ENCODE measurements at regions of chr16 and their contacts with region 1.

Region 1: DNA sequence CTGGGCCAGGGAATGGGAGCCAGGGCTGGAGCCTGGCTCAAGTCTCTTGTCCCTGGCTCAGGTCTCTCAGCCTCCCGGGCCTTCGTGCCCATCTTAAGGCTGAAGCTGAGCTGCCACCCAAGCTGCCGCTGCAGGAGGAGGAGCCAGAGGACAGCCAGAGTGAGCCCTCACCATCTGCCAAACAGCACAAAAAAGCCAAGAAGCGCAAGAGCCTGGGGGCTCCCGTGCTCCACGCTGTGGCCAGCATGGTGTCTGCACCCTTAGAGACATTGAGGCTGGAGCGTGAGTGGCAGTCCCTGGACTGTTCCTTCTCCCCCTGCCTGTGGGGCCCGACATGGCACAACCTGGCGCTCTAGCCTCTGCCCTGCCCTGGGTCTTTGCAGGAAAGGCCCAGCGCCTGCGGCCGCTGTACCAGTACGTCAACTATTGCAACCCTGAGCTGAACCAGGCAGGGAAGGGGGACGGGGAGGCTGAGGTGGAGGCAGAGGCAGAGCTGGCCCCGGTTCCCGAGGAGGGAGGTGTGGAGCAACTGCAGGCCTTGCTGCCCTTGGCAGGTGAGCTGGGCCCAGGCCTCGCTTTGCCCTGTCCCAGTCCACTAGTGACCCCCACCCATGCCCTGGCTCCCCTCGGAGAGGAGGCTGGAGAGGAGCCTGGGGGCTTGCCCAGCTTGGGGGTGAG is 1.3 kb downstream of the C16orf86 start:
- DNase-seq: peak; percentile 90
- H3K4me3 Mint-ChIP-seq: peak overlapping the region; percentile 82
- H3K27ac Mint-ChIP-seq: no peak overlapping the region
- H3K4me1 Mint-ChIP-seq: peaks cover 15% of the 10 kb centered on the region
- H3K27me3 Mint-ChIP-seq: no peaks in the 10 kb centered on the region

Region 2: GRCh38 chr16:67546761-67547422 is 121.1 kb before region 1 on chr16:
- CTCF ChIA-PET with region 1: interaction called, 40 read pairs
- POLR2A ChIA-PET with region 1: interaction called, 3 read pairs
- intact Hi-C with region 1: loop called (anchors 5 kb)
- DNase-seq: peak; percentile 81
- H3K4me3 Mint-ChIP-seq: no peak overlapping the region
- H3K27ac Mint-ChIP-seq: peak overlapping the region; percentile 89
- H3K4me1 Mint-ChIP-seq: peaks cover 34% of the 10 kb centered on the region
- H3K27me3 Mint-ChIP-seq: no peaks in the 10 kb centered on the region

Region 3: DNA sequence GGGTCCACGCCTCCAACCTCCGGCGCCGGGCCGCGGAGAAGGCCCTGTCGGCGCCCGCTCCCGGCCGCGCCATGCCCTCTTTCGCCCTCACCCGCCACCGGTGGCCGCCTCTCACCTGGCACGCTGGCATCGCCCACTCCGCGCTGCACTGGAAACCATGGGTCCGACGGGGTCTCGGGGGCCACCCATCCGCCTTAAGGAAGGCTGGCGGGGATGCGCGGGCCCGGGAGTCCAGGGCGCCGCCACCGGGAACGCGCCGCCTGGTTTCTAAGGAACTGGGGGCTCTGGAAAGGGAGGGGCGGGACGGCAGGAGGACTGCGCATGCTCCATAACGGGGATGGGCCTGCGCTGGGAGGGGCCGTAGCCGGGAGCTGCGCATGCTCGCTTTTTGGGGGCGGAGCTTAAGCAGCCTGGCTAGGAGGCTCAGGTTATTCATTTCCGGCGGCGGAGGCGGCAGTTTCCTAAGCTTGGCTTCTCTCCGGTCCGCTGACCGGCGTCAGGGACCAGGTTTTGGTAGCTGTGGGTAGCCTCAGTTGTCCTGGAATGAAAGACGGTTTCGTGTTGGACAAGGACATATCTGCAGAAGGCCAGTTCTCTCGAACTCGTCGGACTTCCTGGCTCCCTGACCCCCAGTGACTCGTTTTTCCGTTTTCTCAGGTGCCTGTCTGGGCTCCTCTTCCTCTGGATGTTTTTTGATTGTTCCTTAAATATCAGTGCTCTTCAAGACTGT is 51.3 kb after region 1 on chr16 and contains the start of gene GFOD2:
- CTCF ChIA-PET with region 1: interaction called, 6 read pairs
- POLR2A ChIA-PET with region 1: no interaction called
- intact Hi-C with region 1: loop called (anchors 2 kb)
- DNase-seq: peak; percentile 99
- H3K4me3 Mint-ChIP-seq: peak within 1 kb of the TSS; percentile 94
- H3K27ac Mint-ChIP-seq: peak within 1 kb of the TSS; percentile 96
- H3K4me1 Mint-ChIP-seq: peaks cover 35% of the 10 kb centered on the region
- H3K27me3 Mint-ChIP-seq: no peaks in the 10 kb centered on the region
- total RNA-seq, gene GFOD2: 12.6 to 13.7 TPM

Region 4: DNA sequence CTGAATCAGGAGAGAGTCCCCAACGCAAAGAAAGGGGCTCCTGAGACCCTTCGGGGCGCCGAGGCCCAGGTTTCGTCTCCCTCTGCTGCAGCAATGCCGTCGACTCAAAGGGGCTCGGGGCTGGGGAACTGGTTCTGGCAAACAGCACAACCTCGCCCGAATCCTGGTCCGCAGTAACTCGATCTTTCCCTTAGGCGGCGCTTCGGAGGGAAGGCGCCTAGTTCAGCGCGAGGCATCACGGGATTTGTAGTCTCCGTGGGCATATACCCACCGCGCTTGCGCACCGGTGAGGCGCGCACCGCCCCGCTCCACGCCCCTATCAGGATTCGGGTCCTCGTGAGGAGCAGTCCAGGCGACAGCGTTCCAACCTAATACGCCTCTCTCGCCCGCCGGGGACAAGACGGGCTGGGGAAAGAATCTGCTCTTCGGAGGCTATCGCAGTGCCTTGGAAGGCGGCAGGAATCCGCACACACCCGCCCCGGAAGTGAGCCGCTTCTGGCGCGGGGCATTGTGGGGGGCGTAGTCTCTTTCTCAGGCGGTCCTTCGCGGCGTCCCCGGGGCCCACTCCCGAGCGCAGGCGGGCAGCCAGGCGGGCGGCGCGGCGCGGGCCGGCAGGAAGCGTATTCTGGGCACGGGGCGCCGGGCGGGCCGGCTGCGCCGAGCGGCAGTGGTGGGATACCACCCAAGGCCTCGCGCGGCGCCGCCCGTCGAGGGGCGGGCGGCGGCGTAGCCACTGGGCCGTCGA is 174.0 kb after region 1 on chr16 and contains the start of gene THAP11:
- CTCF ChIA-PET with region 1: interaction called, 3 read pairs
- POLR2A ChIA-PET with region 1: no interaction called
- intact Hi-C with region 1: loop called (anchors 10 kb)
- DNase-seq: peak; percentile 97
- H3K4me3 Mint-ChIP-seq: peak within 1 kb of the TSS; percentile 90
- H3K27ac Mint-ChIP-seq: peak within 1 kb of the TSS; percentile 95
- H3K4me1 Mint-ChIP-seq: peaks cover 34% of the 10 kb centered on the region
- H3K27me3 Mint-ChIP-seq: no peaks in the 10 kb centered on the region
- total RNA-seq, gene THAP11: 31.8 to 32.1 TPM